Left ventricle myocardium superior (tissue), 1 donor: ENCODE measurements at regions of chr9 and their contacts with region 1.

Region 1: GRCh38 chr9:26939955-26940711 is 6.9 kb downstream of the PLAA start:
- DNase-seq: no peak
- ATAC-seq: no peak

Region 2: GRCh38 chr9:26892251-26893029 is 47.7 kb before region 1 on chr9 and contains the start of gene CAAP1:
- intact Hi-C with region 1: loop called (anchors 5 kb)
- DNase-seq: peak; percentile 96
- ATAC-seq: peak; percentile 100
- total RNA-seq, gene CAAP1: 6.2 TPM

Region 3: GRCh38 chr9:27086818-27087680 is 146.9 kb after region 1 on chr9:
- intact Hi-C with region 1: no loop called
- DNase-seq: no peak
- ATAC-seq: no peak